CD4-positive, alpha-beta T cell (primary cell): ENCODE measurements at regions of chr6 and their contacts with region 1.

Region 1: GRCh38 chr6:17907406-17908229 is 79.8 kb downstream of the KIF13A start:
- DNase-seq: peak in 3 of 14 experiments; percentile 21 to 75 (median 66)
- ATAC-seq: no peak
- H3K4me3 ChIP-seq: no peak overlapping the region
- H3K4me3 Mint-ChIP-seq: no peak overlapping the region
- H3K27ac ChIP-seq: no peak overlapping the region
- H3K27ac Mint-ChIP-seq: no peak overlapping the region
- H3K4me1 ChIP-seq: no peaks in the 10 kb centered on the region
- H3K4me1 Mint-ChIP-seq: peaks cover 4% of the 10 kb centered on the region
- H3K27me3 ChIP-seq: peaks cover 4 to 7% of the 10 kb centered on the region in 2 experiments
- H3K27me3 Mint-ChIP-seq: peaks cover 13% of the 10 kb centered on the region
- CTCF ChIP-seq: no peak

Region 2: GRCh38 chr6:17536586-17536985 is 371.0 kb before region 1 on chr6:
- CTCF ChIA-PET with region 1: no interaction called
- POLR2A ChIA-PET with region 1: no interaction called
- intact Hi-C with region 1: loop called in 1 of 2 experiments (anchors 10 kb)
- DNase-seq: no peak
- ATAC-seq: no peak
- H3K4me3 ChIP-seq: no peak overlapping the region
- H3K4me3 Mint-ChIP-seq: no peak overlapping the region
- H3K27ac ChIP-seq: no peak overlapping the region
- H3K27ac Mint-ChIP-seq: no peak overlapping the region
- H3K4me1 ChIP-seq: no peaks in the 10 kb centered on the region
- H3K4me1 Mint-ChIP-seq: no peaks in the 10 kb centered on the region
- H3K27me3 ChIP-seq: no peaks in the 10 kb centered on the region
- H3K27me3 Mint-ChIP-seq: peaks cover 14% of the 10 kb centered on the region
- CTCF ChIP-seq: no peak

Region 3: DNA sequence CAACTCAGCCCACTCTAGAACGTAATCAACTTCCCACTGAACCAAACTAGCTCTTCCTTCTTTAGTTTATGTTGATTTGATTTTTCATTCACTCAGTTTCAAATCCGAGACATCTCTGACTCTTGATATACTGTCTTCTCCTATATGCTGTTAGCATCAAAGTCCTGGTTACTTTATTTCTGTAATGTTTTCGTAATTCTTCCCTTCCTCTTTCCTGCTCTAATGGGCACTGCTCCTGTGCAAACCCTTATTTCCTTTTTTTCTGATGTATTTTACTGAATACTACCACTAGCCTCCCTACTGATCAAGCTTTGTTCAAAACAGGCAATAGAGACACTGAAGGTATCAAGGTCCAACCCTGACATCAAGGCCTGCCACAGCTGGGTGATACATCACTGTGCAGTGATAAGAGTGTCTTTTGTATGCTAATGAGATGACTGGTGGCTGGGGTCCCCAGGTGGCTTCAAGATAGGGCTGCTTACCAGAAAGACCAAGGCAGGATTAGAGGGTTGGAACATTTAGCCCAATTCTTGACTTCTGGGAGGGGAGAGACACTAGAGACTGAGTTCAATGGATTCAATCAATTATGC is 15.4 kb before region 1 on chr6:
- CTCF ChIA-PET with region 1: no interaction called
- POLR2A ChIA-PET with region 1: no interaction called
- intact Hi-C with region 1: no loop called
- DNase-seq: no peak
- ATAC-seq: no peak
- H3K4me3 ChIP-seq: no peak overlapping the region
- H3K4me3 Mint-ChIP-seq: no peak overlapping the region
- H3K27ac ChIP-seq: no peak overlapping the region
- H3K27ac Mint-ChIP-seq: no peak overlapping the region
- H3K4me1 ChIP-seq: no peaks in the 10 kb centered on the region
- H3K4me1 Mint-ChIP-seq: no peaks in the 10 kb centered on the region
- H3K27me3 ChIP-seq: no peaks in the 10 kb centered on the region
- H3K27me3 Mint-ChIP-seq: peaks cover 12% of the 10 kb centered on the region
- CTCF ChIP-seq: no peak

Region 4: GRCh38 chr6:17923401-17923863 is 15.8 kb after region 1 on chr6:
- CTCF ChIA-PET with region 1: no interaction called
- POLR2A ChIA-PET with region 1: no interaction called
- intact Hi-C with region 1: no loop called
- DNase-seq: no peak
- ATAC-seq: no peak
- H3K4me3 ChIP-seq: no peak overlapping the region
- H3K4me3 Mint-ChIP-seq: no peak overlapping the region
- H3K27ac ChIP-seq: no peak overlapping the region
- H3K27ac Mint-ChIP-seq: no peak overlapping the region
- H3K4me1 ChIP-seq: no peaks in the 10 kb centered on the region
- H3K4me1 Mint-ChIP-seq: no peaks in the 10 kb centered on the region
- H3K27me3 ChIP-seq: no peaks in the 10 kb centered on the region
- H3K27me3 Mint-ChIP-seq: peaks cover 5% of the 10 kb centered on the region
- CTCF ChIP-seq: no peak